Posterior vena cava (tissue), 2 donors: ENCODE measurements at regions of chr3 and their contacts with region 1.

Region 1: GRCh38 chr3:42061713-42062408 is 29.3 kb upstream of the TRAK1 start:
- DNase-seq: peak; percentile 91

Region 2: DNA sequence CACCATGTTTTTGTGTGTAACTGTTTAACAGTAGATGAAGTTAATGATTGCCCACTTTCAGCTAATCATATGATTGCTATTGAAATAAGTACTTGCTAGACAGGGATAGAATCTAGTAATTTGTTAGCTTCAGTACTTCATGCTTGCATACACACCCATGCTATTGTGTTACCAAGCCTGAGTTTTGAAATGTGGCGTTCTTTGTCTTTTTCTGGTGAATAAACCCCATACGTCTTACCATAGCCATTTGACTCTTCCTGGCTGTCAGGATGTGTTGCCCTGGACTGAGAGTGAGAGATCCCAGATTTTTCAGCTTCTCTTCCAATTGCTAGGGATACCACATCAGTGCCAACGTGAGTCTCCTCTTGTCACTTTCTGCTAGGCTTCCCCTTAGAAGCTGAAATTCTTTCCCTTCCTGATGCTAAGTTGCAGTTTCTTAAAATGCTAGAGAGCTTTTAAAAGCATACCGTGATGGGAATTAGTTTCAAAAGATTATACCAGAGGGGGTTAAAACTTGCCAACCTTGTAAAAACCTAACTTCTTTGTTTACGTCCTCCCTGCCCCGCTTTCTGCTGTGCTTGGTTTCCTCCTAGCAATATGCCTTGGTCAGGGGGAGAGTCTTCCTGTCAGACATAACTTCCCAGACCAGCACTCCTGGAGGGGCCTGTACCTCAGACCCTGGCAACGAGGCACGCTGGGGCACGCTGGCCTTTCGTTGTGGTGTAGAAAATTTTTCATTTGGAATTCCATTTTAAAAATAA is 37.1 kb before region 1 on chr3:
- intact Hi-C with region 1: loop called in 1 of 2 experiments (anchors 5 kb)
- DNase-seq: no peak